CD4-positive, alpha-beta T cell (primary cell): ENCODE measurements at regions of chr1 and their contacts with region 1.

Region 1: GRCh38 chr1:226736908-226737818 is 1.9 kb downstream of the ITPKB start:
- DNase-seq: peak in 13 of 14 experiments; percentile 38 to 78 (median 53)
- ATAC-seq: peak; percentile 6
- H3K4me3 ChIP-seq: peak overlapping the region; percentile 93
- H3K4me3 Mint-ChIP-seq: peak overlapping the region; percentile 98
- H3K27ac ChIP-seq: peak overlapping the region; percentile 59 to 92
- H3K27ac Mint-ChIP-seq: peak overlapping the region; percentile 95
- H3K4me1 ChIP-seq: peaks cover 56% of the 10 kb centered on the region
- H3K4me1 Mint-ChIP-seq: peaks cover 56% of the 10 kb centered on the region
- H3K27me3 ChIP-seq: no peaks in the 10 kb centered on the region
- H3K27me3 Mint-ChIP-seq: peaks cover 7% of the 10 kb centered on the region
- CTCF ChIP-seq: no peak

Region 2: DNA sequence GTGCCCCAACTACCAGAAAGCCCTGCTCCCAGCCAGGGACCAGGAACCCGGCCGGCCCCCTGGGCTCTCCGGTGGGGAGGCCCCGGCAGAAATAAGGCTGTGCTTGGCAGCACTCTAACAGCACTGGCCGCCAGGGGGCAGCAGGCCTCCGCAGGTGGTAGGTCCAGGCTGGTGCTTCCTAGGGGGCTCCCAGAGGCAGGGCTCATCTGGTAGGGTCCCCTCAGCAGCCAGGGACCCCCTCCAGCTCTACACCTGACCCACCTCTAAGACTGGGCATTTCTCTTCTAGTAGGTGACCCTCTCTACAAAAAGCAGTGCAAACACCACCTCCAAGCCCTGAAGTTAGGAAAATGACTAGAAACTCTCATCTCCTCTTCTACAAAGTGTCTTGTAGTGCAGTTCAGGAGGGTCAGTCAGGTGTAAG is 103.0 kb before region 1 on chr1:
- CTCF ChIA-PET with region 1: interaction called, 3 read pairs
- POLR2A ChIA-PET with region 1: interaction called, 15 read pairs
- intact Hi-C with region 1: loop called (anchors 1 to 2 kb)
- DNase-seq: peak; percentile 72 to 90 (median 78)
- ATAC-seq: peak; percentile 71
- H3K4me3 ChIP-seq: no peak overlapping the region
- H3K4me3 Mint-ChIP-seq: peak overlapping the region; percentile 52
- H3K27ac ChIP-seq: peak overlapping the region; percentile 22 to 54
- H3K27ac Mint-ChIP-seq: peak overlapping the region; percentile 87
- H3K4me1 ChIP-seq: peaks cover 55% of the 10 kb centered on the region
- H3K4me1 Mint-ChIP-seq: peaks cover 61% of the 10 kb centered on the region
- H3K27me3 ChIP-seq: no peaks in the 10 kb centered on the region
- H3K27me3 Mint-ChIP-seq: no peaks in the 10 kb centered on the region
- CTCF ChIP-seq: peak; percentile 95

Region 3: DNA sequence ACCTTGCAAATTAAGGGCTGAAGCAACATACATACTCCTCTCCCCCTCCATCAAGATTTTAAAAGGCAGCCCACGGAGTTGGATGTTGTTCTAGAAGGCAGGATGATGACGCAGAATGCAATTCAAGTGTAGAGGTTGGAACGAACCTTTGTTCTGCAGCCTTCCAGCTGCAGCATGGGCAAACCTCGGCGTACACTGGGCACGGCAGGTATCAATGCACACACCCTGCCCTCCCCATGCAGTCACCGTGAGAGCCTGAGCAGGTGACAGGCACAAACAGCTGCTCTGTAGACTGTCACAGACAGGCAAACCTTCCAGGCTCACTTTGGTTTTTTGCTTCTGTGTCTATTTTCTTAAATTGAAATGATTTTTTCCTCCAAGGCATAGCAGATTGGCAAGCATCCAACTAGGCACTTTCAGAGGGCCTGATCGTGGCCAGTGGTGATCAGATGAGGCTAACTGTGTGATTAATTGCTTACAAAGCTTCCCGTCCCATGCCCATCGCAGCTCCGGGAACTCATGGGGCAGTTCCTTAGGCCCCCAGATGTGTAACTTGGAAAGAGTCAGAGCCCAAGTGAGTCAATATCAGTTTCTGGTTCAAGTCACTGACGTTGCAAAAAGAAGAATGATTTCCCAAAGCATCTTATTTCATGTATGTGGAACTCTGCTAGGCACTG is 80.4 kb before region 1 on chr1:
- CTCF ChIA-PET with region 1: no interaction called
- POLR2A ChIA-PET with region 1: interaction called, 26 read pairs
- intact Hi-C with region 1: loop called in 1 of 2 experiments (anchors 5 kb)
- DNase-seq: peak in 13 of 14 experiments; percentile 33 to 90 (median 61)
- ATAC-seq: peak; percentile 77
- H3K4me3 ChIP-seq: no peak overlapping the region
- H3K4me3 Mint-ChIP-seq: peak overlapping the region; percentile 79
- H3K27ac ChIP-seq: peak overlapping the region in 1 of 2 donors; percentile 47
- H3K27ac Mint-ChIP-seq: no peak overlapping the region
- H3K4me1 ChIP-seq: no peaks in the 10 kb centered on the region
- H3K4me1 Mint-ChIP-seq: no peaks in the 10 kb centered on the region
- H3K27me3 ChIP-seq: no peaks in the 10 kb centered on the region
- H3K27me3 Mint-ChIP-seq: no peaks in the 10 kb centered on the region
- CTCF ChIP-seq: no peak

Region 4: GRCh38 chr1:226687426-226687825 is 49.7 kb before region 1 on chr1:
- CTCF ChIA-PET with region 1: interaction called, 10 read pairs
- POLR2A ChIA-PET with region 1: interaction called, 10 read pairs
- intact Hi-C with region 1: loop called (anchors 5 to 10 kb)
- DNase-seq: peak in 12 of 14 experiments; percentile 32 to 81 (median 54)
- ATAC-seq: peak; percentile 27
- H3K4me3 ChIP-seq: no peak overlapping the region
- H3K4me3 Mint-ChIP-seq: peak overlapping the region; percentile 72
- H3K27ac ChIP-seq: peak overlapping the region; percentile 47 to 70
- H3K27ac Mint-ChIP-seq: peak overlapping the region; percentile 98
- H3K4me1 ChIP-seq: peaks cover 94% of the 10 kb centered on the region
- H3K4me1 Mint-ChIP-seq: peaks cover 100% of the 10 kb centered on the region
- H3K27me3 ChIP-seq: no peaks in the 10 kb centered on the region
- H3K27me3 Mint-ChIP-seq: no peaks in the 10 kb centered on the region
- CTCF ChIP-seq: peak; percentile 45

Region 5: DNA sequence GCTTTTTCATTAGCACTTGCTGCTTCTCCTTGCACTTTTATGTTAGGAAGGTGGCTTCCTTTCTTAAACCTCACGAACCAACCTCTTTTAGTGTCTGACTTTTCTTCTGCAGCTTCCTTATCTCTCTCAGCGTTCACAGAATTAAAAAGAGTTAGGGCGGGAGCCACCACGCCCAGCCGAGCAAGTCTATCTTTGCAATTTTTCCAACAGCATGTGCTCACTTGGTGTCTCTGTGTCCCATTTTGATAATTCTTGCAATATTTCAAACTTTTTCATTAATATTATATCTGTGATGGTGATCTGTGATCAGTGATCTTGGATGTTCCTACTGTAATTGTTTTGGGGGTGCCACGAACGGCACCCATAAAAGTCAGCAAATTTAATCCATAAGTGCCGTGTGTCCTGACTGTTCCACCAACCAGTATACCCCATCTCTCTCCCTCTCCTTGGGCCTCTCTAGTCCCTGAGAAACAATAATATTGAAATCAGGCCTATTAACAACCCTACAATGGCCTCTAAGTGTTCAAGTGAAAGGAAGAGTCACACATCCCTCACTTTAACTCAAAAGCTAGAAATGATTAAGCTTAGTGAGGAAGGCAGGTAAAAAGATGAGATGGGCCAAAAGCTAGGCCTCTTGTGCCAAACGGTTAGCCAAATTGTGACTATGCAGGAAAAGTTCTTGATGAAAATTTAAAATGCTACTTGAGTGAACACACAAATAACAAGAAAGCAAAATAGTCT is 17.8 kb after region 1 on chr1:
- CTCF ChIA-PET with region 1: no interaction called
- POLR2A ChIA-PET with region 1: interaction called, 11 read pairs
- intact Hi-C with region 1: no loop called
- DNase-seq: no peak
- ATAC-seq: peak; percentile 37
- H3K4me3 ChIP-seq: no peak overlapping the region
- H3K4me3 Mint-ChIP-seq: peak overlapping the region; percentile 8
- H3K27ac ChIP-seq: no peak overlapping the region
- H3K27ac Mint-ChIP-seq: peak overlapping the region; percentile 26
- H3K4me1 ChIP-seq: peaks cover 17% of the 10 kb centered on the region
- H3K4me1 Mint-ChIP-seq: peaks cover 39% of the 10 kb centered on the region
- H3K27me3 ChIP-seq: no peaks in the 10 kb centered on the region
- H3K27me3 Mint-ChIP-seq: no peaks in the 10 kb centered on the region
- CTCF ChIP-seq: no peak

Region 6: GRCh38 chr1:226940029-226940805 is 203.1 kb after region 1 on chr1 and contains the start of gene COQ8A:
- CTCF ChIA-PET with region 1: no interaction called
- POLR2A ChIA-PET with region 1: interaction called, 14 read pairs
- intact Hi-C with region 1: no loop called
- DNase-seq: peak; percentile 96 to 100 (median 99)
- ATAC-seq: peak; percentile 91
- H3K4me3 ChIP-seq: peak within 1 kb of the TSS; percentile 94
- H3K4me3 Mint-ChIP-seq: peak within 1 kb of the TSS; percentile 91
- H3K27ac ChIP-seq: peak within 1 kb of the TSS; percentile 96 to 98
- H3K27ac Mint-ChIP-seq: peak within 1 kb of the TSS; percentile 95
- H3K4me1 ChIP-seq: peaks cover 46% of the 10 kb centered on the region
- H3K4me1 Mint-ChIP-seq: peaks cover 68% of the 10 kb centered on the region
- H3K27me3 ChIP-seq: no peaks in the 10 kb centered on the region
- H3K27me3 Mint-ChIP-seq: no peaks in the 10 kb centered on the region
- CTCF ChIP-seq: no peak
- total RNA-seq, gene COQ8A: 55.0 to 56.0 TPM